ENCODE measurements at regions of chr15 and their contacts with region 1.

Region 1: DNA sequence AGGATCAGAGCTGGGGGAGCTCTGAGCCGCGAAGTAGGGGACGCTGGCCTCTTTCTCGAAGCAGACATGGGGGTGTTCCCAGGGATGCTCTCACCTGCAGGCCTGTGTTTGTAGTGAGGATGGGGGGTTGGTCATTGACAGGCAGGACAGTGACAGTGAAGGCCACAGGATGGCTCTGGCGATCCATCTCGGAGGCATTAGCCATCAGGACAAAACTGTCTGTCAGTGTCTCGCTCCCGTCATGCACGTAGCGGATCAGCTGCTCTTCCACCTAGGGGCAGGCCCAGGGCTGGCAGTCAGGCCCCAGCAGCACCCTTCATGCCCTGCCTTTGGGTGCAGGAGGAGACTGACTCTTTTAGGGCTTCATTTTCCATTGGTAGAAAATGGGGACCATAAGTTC is 28.0 kb downstream of the CSPG4 start:
- DNase-seq: no peak
- H3K4me3 ChIP-seq: no peak overlapping the region
- H3K27ac ChIP-seq: no peak overlapping the region
- H3K4me1 ChIP-seq: no peaks in the 10 kb centered on the region
- H3K27me3 ChIP-seq: no peaks in the 10 kb centered on the region
- CTCF ChIP-seq: no peak

Region 2: DNA sequence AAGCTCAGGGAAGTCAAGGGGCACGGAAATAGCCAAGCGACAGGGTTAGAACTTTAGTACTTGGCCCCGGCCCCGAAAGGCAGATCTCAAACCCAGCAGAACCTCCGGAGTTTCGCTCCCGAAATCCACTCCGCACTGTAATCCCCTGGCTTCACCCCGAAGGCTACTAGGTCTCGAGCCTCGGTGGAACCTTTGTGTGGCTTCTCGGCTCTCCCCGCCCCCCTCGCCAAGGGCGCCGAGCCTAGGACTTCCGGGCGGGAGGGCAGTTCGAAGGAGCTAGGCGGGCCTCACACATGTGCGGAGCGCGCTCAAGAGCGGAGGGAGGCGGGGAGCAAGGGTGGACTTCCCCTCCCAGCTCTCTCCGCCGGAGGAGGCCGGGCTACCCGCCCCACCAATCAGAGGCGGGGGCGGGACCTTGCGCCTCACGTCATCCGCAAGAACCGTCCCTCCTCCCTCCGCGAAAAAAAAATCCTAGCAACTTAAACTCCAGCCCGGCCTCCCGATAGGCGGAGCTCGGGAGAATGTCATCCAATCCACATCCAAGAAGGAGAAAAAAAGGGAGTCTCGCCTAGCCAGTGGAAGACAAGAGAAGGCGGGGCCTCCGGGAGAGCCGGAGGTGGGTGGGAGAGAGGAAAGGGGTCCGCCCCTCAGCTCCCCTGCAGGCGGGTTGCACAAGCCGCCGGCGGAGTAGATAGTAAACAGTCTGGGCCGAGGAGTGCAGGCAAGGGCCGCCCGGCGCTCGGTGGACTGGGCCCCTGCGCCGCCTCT is 230.8 kb before region 1 on chr15:
- CTCF ChIA-PET with region 1: no interaction called
- dilution Hi-C with region 1: no loop called
- in situ Hi-C with region 1: no loop called
- intact Hi-C with region 1: loop called (anchors 2 kb)
- DNase-seq: peak; percentile 100
- H3K4me3 ChIP-seq: peak overlapping the region; percentile 80 to 96 (median 91)
- H3K27ac ChIP-seq: peak overlapping the region; percentile 87
- H3K4me1 ChIP-seq: peaks cover 31% of the 10 kb centered on the region
- H3K27me3 ChIP-seq: no peaks in the 10 kb centered on the region
- CTCF ChIP-seq: no peak

Region 3: GRCh38 chr15:75639709-75640482 is 44.7 kb before region 1 on chr15 and contains the start of gene IMP3:
- CTCF ChIA-PET with region 1: no interaction called
- dilution Hi-C with region 1: loop called (anchors 5 kb)
- in situ Hi-C with region 1: no loop called
- intact Hi-C with region 1: loop called (anchors 1 kb)
- DNase-seq: peak; percentile 96
- H3K4me3 ChIP-seq: peak within 1 kb of the TSS; percentile 83 to 97 (median 95)
- H3K27ac ChIP-seq: peak within 1 kb of the TSS; percentile 72
- H3K4me1 ChIP-seq: peaks cover 16% of the 10 kb centered on the region
- H3K27me3 ChIP-seq: no peaks in the 10 kb centered on the region
- CTCF ChIP-seq: no peak
- total RNA-seq, gene IMP3: 46.5 to 62.8 TPM

Region 4: DNA sequence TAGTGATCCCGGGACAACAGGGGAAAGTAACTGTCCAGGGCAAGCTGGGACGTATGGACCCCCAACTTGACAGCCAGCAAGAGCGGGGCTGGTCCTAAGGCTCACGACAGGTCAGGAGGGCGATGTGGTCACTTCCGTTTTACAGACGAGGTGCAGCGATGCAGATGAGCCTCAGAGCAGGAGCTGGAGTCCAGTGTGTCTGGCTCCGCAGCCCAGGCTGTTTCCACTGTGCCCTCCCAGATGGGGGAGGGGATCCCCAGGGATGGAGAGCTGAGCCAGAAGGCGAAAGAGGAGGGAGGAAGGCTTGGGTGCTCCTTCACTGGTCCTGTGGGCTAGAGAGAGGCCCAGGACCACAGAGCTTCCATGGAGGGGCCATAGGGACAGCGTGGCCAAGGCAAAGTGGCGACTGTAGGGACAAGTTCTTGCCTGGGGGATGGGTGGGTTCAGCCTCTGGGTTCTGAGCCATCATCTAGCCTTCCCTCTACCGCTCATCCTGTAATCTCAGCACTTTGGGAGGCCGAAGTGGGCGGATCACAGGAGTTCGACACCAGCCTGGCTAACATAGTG is 31.2 kb before region 1 on chr15:
- CTCF ChIA-PET with region 1: no interaction called
- dilution Hi-C with region 1: no loop called
- in situ Hi-C with region 1: no loop called
- intact Hi-C with region 1: no loop called
- DNase-seq: no peak
- H3K4me3 ChIP-seq: no peak overlapping the region
- H3K27ac ChIP-seq: no peak overlapping the region
- H3K4me1 ChIP-seq: peaks cover 64% of the 10 kb centered on the region
- H3K27me3 ChIP-seq: no peaks in the 10 kb centered on the region
- CTCF ChIP-seq: no peak

Region 5: DNA sequence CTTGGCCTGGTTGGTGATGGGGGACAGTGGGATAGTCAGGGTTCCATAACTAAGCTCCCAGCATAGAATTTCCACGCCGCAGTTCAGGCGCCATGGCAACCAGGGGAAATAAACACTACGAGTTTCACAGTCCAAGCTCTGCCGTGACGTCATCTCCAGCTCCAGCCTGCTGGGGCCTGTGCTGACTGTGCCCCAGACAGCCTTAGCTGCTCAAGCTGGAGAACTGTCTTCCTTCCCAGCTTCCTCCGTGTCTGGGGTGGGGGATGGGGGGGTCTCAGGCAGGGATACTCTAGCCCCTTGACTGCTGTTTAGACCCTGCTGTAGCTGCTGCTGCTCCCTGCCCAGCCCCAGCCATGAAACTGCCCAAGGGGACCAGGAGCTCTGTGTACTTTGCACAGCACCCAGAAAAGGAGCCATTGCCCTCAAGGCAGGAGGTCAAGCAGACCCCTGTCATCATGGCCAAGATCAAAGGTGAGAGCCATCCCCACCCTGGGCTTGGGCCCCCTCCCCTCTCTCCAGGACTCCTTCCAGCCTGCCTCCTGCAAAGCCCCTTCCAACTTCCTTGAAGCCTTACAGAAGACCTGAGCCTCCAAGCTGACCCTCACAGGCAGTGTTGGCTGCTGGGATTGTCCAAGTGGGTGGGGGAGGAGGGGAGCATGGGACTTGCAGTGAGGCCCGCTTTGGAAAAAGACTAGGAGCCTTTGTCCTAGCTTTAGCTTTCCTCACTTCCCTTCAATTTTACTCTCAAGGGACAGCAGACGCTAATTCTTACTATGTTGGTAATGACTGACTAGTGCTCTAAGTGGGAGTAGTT is 39.4 kb after region 1 on chr15:
- CTCF ChIA-PET with region 1: no interaction called
- dilution Hi-C with region 1: no loop called
- in situ Hi-C with region 1: no loop called
- intact Hi-C with region 1: loop called (anchors 2 kb)
- DNase-seq: peak; percentile 90
- H3K4me3 ChIP-seq: no peak overlapping the region
- H3K27ac ChIP-seq: peak overlapping the region; percentile 87
- H3K4me1 ChIP-seq: peaks cover 21% of the 10 kb centered on the region
- H3K27me3 ChIP-seq: no peaks in the 10 kb centered on the region
- CTCF ChIP-seq: no peak

Region 6: GRCh38 chr15:75801859-75802593 is 117.4 kb after region 1 on chr15:
- CTCF ChIA-PET with region 1: interaction called, 6 read pairs
- dilution Hi-C with region 1: loop called (anchors 5 kb)
- in situ Hi-C with region 1: loop called in 1 of 2 experiments (anchors 5 kb)
- intact Hi-C with region 1: loop called (anchors 1 kb)
- DNase-seq: peak; percentile 54
- H3K4me3 ChIP-seq: peak overlapping the region; percentile 12 to 42 (median 19)
- H3K27ac ChIP-seq: no peak overlapping the region
- H3K4me1 ChIP-seq: peaks cover 6% of the 10 kb centered on the region
- H3K27me3 ChIP-seq: no peaks in the 10 kb centered on the region
- CTCF ChIP-seq: peak; percentile 35 to 85

Measured in mammary epithelial cell (primary cell).